Caco-2 (cell line): ENCODE measurements at regions of chr2 and their contacts with region 1.

Region 1: DNA sequence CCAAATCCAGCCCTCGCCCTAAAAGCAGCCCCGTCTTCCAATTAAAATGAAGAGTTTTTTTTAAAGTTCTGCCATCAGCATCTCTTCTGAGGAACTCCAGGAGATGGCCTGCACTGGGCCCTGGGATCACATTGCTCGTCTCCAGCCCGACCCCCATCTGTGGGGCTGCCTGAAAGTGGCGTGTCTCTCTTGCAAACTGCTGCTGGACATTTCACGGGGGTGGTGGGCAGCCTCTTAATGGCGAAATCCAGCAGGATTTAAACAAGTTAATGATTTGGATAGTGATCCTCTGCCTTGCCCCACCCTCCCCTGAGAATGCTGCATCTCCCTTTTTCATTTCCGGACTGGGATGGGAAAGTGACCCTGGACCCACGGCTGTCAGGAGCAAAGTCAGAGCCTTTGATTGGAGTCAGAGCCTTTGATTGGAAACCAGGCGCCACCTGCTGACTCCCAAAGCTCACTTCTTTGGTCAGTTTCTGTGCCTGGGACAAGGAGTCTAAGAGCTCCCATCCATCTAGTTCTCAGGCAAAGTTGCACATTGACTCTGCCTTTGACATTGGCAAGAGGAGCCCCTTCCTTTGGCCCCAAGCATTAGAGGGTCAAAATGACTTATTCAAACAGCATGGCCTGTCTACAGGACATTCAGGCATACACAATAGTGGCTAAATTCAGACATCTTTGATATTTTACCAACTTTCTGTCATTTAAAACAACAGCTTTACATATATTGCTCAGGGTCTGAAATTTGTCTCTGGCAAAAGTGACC is 155.2 kb downstream of the SH3BP4 start:
- DNase-seq: peak; percentile 67 to 70
- H3K4me3 ChIP-seq: no peak overlapping the region
- H3K4me3 Mint-ChIP-seq: no peak overlapping the region
- H3K27ac Mint-ChIP-seq: no peak overlapping the region
- H3K4me1 ChIP-seq: no peaks in the 10 kb centered on the region
- H3K4me1 Mint-ChIP-seq: no peaks in the 10 kb centered on the region
- H3K27me3 ChIP-seq: no peaks in the 10 kb centered on the region
- H3K27me3 Mint-ChIP-seq: no peaks in the 10 kb centered on the region
- CTCF ChIP-seq: peak; percentile 45 to 77

Region 2: DNA sequence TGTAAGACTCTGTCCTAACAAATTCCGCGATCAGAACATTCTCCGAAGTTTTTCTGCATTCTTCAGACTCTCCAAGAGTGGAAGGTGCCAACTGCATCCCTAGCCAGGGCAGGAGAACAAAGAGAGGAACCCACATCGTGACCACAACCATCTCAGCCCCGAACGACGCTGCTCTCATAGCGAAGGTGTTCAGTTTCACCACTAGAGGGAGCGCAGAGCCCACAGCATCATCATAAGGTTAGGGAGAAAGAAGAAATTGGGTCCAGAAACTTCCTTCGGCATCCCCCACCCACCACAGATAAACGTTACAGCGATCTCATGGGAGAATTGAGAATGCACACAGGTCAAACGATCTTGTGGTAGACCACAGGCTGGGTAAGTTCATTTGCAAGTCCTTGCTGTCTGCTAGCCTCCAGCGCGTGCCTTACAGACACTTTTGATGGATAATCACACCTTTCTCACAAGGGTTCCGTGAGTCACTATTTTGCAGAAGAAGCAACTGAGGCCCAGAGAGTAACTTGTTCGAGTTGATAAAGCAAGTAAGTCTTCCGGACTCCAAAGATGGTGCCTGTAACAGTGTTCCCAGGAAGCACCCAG is 556.4 kb before region 1 on chr2:
- CTCF ChIA-PET with region 1: interaction called, 6 read pairs
- POLR2A ChIA-PET with region 1: no interaction called
- intact Hi-C with region 1: loop called (anchors 1 kb)
- DNase-seq: peak; percentile 55 to 66
- H3K4me3 ChIP-seq: no peak overlapping the region
- H3K4me3 Mint-ChIP-seq: no peak overlapping the region
- H3K27ac Mint-ChIP-seq: no peak overlapping the region
- H3K4me1 ChIP-seq: no peaks in the 10 kb centered on the region
- H3K4me1 Mint-ChIP-seq: peaks cover 4% of the 10 kb centered on the region
- H3K27me3 ChIP-seq: no peaks in the 10 kb centered on the region
- H3K27me3 Mint-ChIP-seq: peaks cover 2% of the 10 kb centered on the region
- CTCF ChIP-seq: peak; percentile 78

Region 3: GRCh38 chr2:234881413-234882241 is 225.4 kb before region 1 on chr2:
- CTCF ChIA-PET with region 1: interaction called, 4 read pairs
- POLR2A ChIA-PET with region 1: no interaction called
- intact Hi-C with region 1: loop called (anchors 2 kb)
- DNase-seq: peak; percentile 64 to 70
- H3K4me3 ChIP-seq: no peak overlapping the region
- H3K4me3 Mint-ChIP-seq: no peak overlapping the region
- H3K27ac Mint-ChIP-seq: no peak overlapping the region
- H3K4me1 ChIP-seq: no peaks in the 10 kb centered on the region; the same call in 1 of the 2 replicates
- H3K4me1 Mint-ChIP-seq: no peaks in the 10 kb centered on the region
- H3K27me3 ChIP-seq: no peaks in the 10 kb centered on the region
- H3K27me3 Mint-ChIP-seq: no peaks in the 10 kb centered on the region
- CTCF ChIP-seq: peak; percentile 35 to 46

Region 4: DNA sequence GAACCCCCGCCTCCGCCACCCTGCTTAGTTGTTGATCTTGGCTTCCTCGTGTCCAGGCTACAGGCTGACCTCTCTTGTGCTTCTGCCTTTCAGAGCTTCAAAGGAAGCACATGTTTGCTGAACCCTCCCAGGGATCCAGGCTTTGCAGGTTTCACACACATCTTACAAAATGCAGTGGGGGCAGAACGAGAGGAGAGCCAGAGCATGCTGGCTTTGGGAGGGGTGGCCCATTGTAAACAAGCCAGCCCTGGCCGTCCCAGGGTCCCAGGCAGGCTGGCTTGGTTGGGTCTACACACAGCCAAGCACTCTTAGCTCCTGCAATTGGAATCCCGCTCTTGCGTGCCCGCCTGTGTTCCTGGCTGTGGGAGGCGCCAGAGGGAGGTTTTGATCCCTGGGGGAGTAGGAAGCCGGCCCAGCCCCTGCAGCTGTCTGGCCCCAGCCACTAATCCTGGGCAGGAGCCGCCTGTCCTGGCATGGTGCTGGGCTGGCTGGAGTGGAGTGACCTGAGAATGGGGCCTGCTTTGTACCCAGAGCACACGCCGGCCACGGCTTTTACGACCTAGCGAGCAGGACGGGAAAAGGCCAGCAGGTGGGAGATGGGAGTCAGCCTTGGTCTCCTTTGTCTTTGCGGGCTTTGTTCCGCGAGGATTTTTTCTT is 101.3 kb before region 1 on chr2:
- CTCF ChIA-PET with region 1: interaction called, 7 read pairs
- POLR2A ChIA-PET with region 1: no interaction called
- intact Hi-C with region 1: loop called (anchors 5 kb)
- DNase-seq: peak; percentile 56 to 59
- H3K4me3 ChIP-seq: no peak overlapping the region
- H3K4me3 Mint-ChIP-seq: peak overlapping the region; percentile 40
- H3K27ac Mint-ChIP-seq: peak overlapping the region; percentile 52
- H3K4me1 ChIP-seq: peaks cover 89% of the 10 kb centered on the region
- H3K4me1 Mint-ChIP-seq: peaks cover 40% of the 10 kb centered on the region
- H3K27me3 ChIP-seq: no peaks in the 10 kb centered on the region
- H3K27me3 Mint-ChIP-seq: no peaks in the 10 kb centered on the region
- CTCF ChIP-seq: peak in 1 of 2 experiments; percentile 19

Region 5: GRCh38 chr2:235026649-235027557 is 80.2 kb before region 1 on chr2:
- CTCF ChIA-PET with region 1: no interaction called
- POLR2A ChIA-PET with region 1: no interaction called
- intact Hi-C with region 1: no loop called
- DNase-seq: peak; percentile 54 to 74
- H3K4me3 ChIP-seq: no peak overlapping the region
- H3K4me3 Mint-ChIP-seq: no peak overlapping the region
- H3K27ac Mint-ChIP-seq: peak overlapping the region; percentile 59
- H3K4me1 ChIP-seq: peaks cover 31% of the 10 kb centered on the region
- H3K4me1 Mint-ChIP-seq: peaks cover 28% of the 10 kb centered on the region
- H3K27me3 ChIP-seq: no peaks in the 10 kb centered on the region
- H3K27me3 Mint-ChIP-seq: no peaks in the 10 kb centered on the region
- CTCF ChIP-seq: no peak

Region 6: DNA sequence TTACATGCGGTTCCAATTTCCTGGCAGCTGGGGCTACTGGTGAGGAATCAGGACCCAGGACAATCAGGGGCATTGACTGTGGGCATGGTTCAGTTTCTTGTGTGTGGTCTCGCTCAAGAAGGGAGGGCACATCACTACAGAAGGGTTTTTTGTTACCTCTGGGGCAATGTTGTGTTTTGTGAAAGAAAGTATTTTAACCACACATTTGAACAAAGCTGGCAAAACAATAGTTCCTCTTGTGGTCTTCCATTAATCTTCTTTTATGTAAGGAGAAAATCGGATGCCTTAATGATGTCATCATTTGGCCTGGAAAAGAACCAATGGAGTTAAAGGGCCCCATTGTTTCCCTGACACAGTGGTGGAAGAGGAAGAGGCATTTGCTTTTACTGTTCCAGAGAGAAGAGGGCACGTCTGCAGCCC is 42.2 kb after region 1 on chr2:
- CTCF ChIA-PET with region 1: no interaction called
- POLR2A ChIA-PET with region 1: no interaction called
- intact Hi-C with region 1: no loop called
- DNase-seq: no peak
- H3K4me3 ChIP-seq: no peak overlapping the region
- H3K4me3 Mint-ChIP-seq: no peak overlapping the region
- H3K27ac Mint-ChIP-seq: no peak overlapping the region
- H3K4me1 ChIP-seq: no peaks in the 10 kb centered on the region
- H3K4me1 Mint-ChIP-seq: peaks cover 5% of the 10 kb centered on the region
- H3K27me3 ChIP-seq: no peaks in the 10 kb centered on the region
- H3K27me3 Mint-ChIP-seq: peaks cover 5% of the 10 kb centered on the region
- CTCF ChIP-seq: no peak